Activated CD4-positive, alpha-beta T cell treated with anti-CD3 and anti-CD28 coated beads, Interleukin-2, amount 10 ng/mL, durations not matched to agents 7 days and 5 days (primary cell): ENCODE measurements at regions of chr11 and their contacts with region 1.

Region 1: DNA sequence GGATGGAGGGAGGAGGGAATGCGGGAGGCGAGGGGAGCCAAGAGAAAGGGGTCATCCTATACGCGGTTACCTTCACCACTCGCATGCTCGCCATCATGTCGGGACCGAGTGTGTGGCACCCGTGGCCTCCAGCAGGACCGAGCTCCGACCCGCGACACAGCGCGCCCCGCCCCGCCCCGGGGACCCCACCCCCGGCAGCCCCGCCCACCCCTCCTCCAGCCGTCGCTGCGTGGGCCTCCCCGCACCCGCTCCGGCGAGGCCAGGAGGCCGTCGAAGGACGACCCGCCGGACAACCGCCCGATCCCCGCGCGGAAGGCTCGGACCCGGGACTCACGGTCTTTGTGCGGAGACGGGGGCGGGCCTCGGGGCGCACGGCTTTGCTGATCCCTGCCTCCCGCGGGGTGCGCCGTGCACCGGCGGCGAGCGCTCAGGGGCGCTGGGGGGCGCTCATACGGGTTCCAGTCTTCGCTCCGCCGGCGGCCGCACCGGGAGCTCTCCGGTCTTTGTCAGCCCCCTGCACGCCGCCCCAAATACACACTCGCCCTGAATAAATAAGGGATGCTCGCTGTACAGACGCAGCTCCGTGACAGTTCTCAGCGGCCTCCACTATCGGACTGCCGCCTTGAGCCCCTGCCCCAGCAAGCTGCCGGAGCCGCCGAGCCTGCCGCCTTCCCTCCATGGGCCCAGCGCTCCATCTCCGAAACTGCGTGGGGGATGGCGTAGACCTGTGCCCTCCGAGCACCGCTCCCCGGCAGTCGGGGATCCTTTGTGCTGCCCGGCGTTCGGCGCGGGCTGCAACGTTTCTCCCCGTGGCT is at the start of gene UBE2L6:
- DNase-seq: peak; percentile 89
- H3K4me3 Mint-ChIP-seq: peak within 1 kb of the TSS; percentile 96
- H3K27ac Mint-ChIP-seq: peak within 1 kb of the TSS; percentile 97
- H3K4me1 Mint-ChIP-seq: peaks cover 49% of the 10 kb centered on the region
- H3K27me3 Mint-ChIP-seq: no peaks in the 10 kb centered on the region
- total RNA-seq, gene UBE2L6: 303 to 350 TPM

Region 2: DNA sequence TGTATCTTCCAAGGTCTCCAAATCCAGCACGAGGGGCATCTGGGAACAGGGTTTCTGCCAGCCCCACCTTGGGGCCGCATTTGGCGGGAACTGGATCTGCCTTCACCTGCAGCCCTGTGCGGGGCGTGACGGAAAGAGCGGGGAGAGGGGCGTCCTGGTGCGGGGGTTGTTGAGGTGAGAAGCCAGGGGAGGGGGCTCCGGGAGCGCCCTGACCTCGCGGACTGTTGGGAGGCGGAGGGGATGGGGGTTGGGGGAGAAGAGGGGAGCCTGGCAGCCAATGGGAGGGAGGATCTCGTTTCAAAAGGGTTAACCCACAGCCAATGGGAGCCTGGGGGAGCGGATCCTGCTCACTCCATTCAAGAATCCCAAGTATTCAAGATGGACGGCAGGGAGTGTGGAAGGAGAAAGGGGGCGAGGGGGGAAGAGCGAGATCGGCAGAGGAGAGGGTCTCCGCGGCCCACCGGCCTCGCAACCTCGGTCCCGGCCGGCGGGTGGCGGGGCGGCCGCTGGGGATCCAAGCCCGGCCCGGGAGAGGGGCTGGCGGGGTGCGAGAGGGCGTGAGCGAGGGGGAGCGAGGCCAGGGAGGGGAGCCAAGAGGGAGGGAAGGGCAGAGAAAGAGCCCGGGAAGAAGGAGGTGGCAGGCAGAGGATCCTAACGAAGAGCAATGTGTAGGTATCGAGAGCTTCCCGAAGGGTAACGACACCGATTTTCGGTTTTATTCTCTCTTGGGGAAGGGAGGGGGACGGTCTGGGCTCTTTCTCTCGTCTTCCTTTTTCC is 70.5 kb after region 1 on chr11:
- CTCF ChIA-PET with region 1: interaction called, 45 read pairs
- POLR2A ChIA-PET with region 1: no interaction called
- DNase-seq: peak; percentile 24
- H3K4me3 Mint-ChIP-seq: peak overlapping the region; percentile 82
- H3K27ac Mint-ChIP-seq: peak overlapping the region; percentile 82
- H3K4me1 Mint-ChIP-seq: peaks cover 35% of the 10 kb centered on the region
- H3K27me3 Mint-ChIP-seq: peaks cover 35% of the 10 kb centered on the region

Region 3: GRCh38 chr11:57644748-57645688 is 77.3 kb after region 1 on chr11:
- CTCF ChIA-PET with region 1: interaction called, 45 read pairs
- POLR2A ChIA-PET with region 1: no interaction called
- DNase-seq: peak; percentile 92
- H3K4me3 Mint-ChIP-seq: no peak overlapping the region
- H3K27ac Mint-ChIP-seq: no peak overlapping the region
- H3K4me1 Mint-ChIP-seq: peaks cover 55% of the 10 kb centered on the region
- H3K27me3 Mint-ChIP-seq: peaks cover 65% of the 10 kb centered on the region